Activated B cell treated with CpG ODN at 0.5 μM for 24 hours (primary cell): ENCODE measurements at regions of chr3 and their contacts with region 1.

Region 1: DNA sequence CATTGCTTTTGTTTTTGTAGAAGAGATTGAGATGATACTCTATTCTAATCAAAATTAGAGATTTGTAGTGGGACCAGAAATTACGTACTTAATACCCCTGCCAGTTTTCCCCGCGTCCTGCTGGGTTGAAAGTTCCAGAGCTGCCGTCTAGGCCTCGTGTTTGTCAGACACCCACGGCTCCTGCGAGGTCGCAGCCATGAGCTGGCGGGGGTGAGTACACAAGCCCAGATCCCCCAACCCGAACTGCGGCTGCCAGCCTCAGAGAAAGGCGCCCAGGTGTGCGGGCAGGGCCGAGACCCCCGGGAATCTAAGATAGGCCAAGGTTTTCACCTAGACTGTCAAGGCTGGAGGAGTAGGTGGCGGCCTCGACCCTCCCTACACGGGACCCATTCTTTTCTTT is 26.3 kb downstream of the GPR160 start:
- DNase-seq: no peak
- ATAC-seq: no peak
- H3K4me3 Mint-ChIP-seq: no peak overlapping the region
- H3K27ac Mint-ChIP-seq: no peak overlapping the region
- H3K4me1 Mint-ChIP-seq: no peaks in the 10 kb centered on the region
- H3K27me3 Mint-ChIP-seq: no peaks in the 10 kb centered on the region
- CTCF ChIP-seq: no peak

Region 2: GRCh38 chr3:170196833-170197232 is 132.7 kb after region 1 on chr3:
- CTCF ChIA-PET with region 1: no interaction called
- POLR2A ChIA-PET with region 1: interaction called, 12 read pairs
- intact Hi-C with region 1: no loop called
- DNase-seq: no peak
- ATAC-seq: no peak
- H3K4me3 Mint-ChIP-seq: no peak overlapping the region
- H3K27ac Mint-ChIP-seq: no peak overlapping the region
- H3K4me1 Mint-ChIP-seq: no peaks in the 10 kb centered on the region
- H3K27me3 Mint-ChIP-seq: peaks cover 2% of the 10 kb centered on the region
- CTCF ChIP-seq: no peak